Motor neuron (in vitro differentiated cells): ENCODE measurements at regions of chr6 and their contacts with region 1.

Region 1: DNA sequence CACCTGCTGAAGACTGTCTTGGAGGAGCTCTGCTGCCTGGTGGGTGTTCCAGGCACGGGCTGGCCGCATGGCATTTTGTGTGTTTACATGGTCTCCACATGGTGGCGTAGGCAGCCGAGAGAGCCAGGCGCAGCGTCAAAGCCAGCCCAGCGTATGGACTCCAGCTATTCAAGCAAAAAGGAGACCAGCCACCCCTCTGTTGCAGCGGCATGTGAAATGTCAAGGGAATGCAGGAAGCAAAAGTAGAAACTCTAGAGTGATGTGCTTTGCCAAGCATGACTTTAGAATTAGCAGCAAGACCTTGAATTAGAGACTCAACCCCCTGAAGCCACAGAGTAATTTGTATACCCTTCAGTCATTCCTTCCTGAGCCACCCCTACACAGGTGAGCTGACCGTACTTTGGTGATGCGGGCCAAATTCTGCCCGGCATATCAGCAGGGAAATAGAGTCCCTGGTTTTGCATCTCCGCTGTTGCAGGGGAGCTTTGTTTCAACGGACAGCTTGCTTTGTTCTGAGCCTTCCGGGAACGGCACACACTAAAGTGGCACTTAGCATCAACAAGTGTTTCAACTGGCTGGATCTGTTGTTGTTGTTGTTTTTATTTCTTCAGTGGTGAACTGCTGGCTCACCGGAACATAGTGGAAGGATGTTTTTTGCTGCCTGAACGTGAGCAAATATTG is 48.5 kb downstream of the FNDC1 start:
- ATAC-seq: peak in 5 of 8 experiments; percentile 32 to 94 (median 60)
- H3K4me3 ChIP-seq: no peak overlapping the region
- H3K27ac ChIP-seq: no peak overlapping the region
- H3K4me1 ChIP-seq: peaks cover 0 to 6% of the 10 kb centered on the region in 2 donors

Region 2: DNA sequence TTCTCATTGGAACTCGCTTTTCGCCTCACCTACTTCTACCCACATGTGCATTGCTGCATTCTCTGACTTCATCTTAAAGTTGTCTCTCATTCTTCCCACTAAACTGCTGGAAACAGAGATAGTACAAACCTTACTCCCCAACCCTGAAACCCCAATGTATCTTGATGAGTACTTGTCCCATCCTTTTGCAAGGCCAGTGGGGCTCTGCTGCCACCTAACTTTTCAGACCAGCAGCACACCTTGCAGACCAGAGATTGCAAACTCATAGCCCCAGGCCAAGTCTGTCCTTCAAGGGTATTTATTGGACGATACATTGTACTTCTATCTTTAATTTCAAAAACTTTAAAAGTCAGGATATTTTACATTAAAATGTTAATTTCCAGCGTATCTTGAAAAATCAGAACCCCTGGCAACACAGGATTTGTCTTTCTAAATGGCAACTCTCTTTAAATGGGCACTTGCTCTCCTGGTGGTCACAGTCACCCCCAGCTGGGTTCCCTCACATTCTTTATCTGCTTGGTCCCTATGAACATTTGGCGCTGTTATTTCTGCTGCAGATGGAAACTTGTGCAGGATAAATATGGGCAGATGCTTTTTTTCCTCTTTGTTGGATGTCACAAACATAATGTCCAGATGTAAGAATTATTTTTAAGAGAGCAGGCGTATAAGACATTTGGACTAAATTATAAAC is 391.4 kb after region 1 on chr6:
- in situ Hi-C with region 1: loop called in 1 of 9 experiments (anchors 25 kb)
- ATAC-seq: peak in 3 of 8 experiments; percentile 44 to 80 (median 74)
- H3K4me3 ChIP-seq: no peak overlapping the region
- H3K27ac ChIP-seq: no peak overlapping the region
- H3K4me1 ChIP-seq: no peaks in the 10 kb centered on the region